ENCODE measurements at regions of chr6 and their contacts with region 1.

Region 1: DNA sequence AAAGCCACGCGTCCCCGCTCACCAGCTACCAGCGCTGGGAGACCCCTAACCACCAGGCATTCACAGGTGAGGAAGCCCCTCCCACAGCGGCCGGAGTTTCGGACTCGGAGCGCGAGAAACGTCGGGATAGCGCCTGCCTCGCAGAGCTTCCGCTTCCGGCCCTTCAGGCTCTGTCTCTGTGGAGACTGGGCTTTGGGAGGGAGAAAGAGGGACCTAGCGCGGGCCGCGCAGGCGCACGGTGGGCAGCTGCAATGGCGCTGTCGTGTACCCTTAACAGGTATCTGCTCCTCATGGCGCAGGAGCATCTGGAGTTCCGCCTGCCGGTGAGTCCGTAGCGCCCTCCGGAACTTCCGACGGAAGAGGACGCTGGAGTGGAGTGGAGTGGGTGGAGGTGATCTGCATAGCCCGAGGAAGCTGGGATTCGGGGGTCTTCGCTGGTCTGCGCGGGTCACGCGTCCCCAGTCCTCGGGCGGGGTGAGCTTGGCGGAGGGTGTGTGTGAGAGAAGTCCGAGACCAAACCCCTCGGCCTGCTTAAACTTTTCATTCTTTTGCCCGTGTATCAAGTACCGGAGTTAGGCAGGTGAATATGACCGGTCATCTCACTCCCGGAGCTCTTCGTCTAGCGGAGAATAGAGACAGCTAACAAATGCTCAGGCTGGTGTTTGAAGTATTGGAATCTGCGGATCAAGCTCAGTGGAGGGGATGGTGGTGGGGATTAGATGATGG is at the start of gene TRMT11:
- DNase-seq: peak; percentile 84
- H3K4me3 Mint-ChIP-seq: peak within 1 kb of the TSS; percentile 28
- H3K27ac Mint-ChIP-seq: no peak within 1 kb of the TSS
- H3K4me1 Mint-ChIP-seq: peaks cover 11% of the 10 kb centered on the region
- H3K27me3 Mint-ChIP-seq: no peaks in the 10 kb centered on the region
- total RNA-seq, gene TRMT11: 40.6 to 41.9 TPM

Region 2: DNA sequence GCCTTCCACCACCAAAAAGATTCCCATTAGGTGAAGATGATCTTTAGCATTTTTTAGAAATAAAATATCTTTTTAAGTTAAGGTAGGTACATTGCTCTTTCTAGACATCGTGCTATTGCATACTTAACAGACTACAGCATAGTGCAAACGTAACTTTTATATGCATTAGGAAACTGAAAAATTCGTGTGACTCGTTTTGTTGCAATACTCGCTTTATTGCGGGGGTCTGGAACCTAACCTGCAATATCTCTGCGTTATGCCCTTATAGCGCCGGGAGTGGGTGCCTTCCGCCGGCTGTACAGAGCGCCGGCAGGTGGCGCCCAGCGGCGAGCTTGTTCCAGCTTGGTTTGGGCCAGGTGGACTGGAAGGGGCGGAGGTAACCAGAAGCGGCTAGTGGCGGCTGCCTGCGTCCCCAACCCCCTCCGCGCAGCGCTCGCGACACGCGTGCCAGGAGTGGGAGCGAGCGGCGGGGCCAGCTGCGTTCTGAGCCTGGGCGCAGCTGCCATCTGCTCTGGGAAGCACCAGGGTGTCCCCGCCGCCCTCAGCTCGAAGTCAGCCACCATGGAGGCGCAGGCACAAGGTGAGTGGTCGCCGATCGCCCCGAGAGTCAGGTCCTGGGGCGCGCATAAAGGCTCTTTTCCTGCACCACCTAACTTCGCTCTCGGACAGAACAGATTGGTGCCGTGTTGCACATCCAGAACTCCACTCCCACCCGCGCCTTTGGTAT is 832.9 kb before region 1 on chr6 and contains the start of gene TPD52L1:
- CTCF ChIA-PET with region 1: no interaction called
- intact Hi-C with region 1: loop called (anchors 5 kb)
- DNase-seq: peak; percentile 73
- H3K4me3 Mint-ChIP-seq: peak within 1 kb of the TSS; percentile 74
- H3K27ac Mint-ChIP-seq: no peak within 1 kb of the TSS
- H3K4me1 Mint-ChIP-seq: peaks cover 6% of the 10 kb centered on the region
- H3K27me3 Mint-ChIP-seq: peaks cover 28% of the 10 kb centered on the region
- total RNA-seq, gene TPD52L1: 5.6 to 5.7 TPM

Region 3: GRCh38 chr6:125301435-125302391 is 684.8 kb before region 1 on chr6 and contains the start of gene HDDC2:
- CTCF ChIA-PET with region 1: no interaction called
- intact Hi-C with region 1: loop called (anchors 5 kb)
- DNase-seq: peak; percentile 38
- H3K4me3 Mint-ChIP-seq: peak within 1 kb of the TSS; percentile 88
- H3K27ac Mint-ChIP-seq: peak within 1 kb of the TSS; percentile 93
- H3K4me1 Mint-ChIP-seq: peaks cover 48% of the 10 kb centered on the region
- H3K27me3 Mint-ChIP-seq: no peaks in the 10 kb centered on the region
- total RNA-seq, gene HDDC2: 117 to 127 TPM

Region 4: DNA sequence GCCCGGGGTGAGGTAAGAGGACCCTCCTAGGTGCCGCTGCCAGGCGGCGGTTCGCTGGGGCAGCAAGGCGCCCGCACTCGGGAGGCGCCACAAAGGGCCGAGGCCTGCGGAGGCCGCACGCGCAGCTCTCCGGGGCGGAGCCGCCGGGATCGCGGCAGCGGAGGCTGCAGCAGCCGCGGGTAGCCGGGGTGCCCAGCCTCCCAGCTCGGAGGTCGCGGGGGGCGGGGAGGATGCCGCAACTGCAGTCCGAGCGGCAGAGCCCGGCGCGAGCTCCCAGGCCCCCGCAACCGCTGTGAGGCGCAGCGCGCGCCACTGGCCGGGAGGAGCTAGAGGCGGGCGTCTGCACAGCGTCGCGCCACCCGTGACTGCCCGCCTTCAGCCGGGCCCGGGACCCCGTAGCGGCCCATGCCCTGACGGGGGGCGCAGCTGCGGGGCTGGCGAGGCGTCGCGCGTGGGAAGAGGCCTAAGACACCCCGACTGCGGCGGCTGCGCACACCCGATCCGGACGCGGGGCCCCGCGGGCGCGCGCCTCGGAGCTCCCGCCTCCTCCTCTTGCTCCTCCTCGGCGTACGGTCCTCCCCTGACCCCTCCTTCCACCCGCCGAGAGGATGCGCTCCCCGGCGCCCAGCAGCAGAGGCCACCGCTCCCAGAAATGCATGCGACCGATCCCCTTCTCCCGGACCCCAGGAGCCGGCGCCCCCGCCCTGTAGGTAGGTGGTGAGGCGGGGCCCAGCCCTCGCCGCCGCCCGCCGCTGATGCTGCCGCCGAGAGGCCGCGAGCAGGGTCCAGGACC is 195.9 kb before region 1 on chr6 and contains the start of gene NCOA7:
- CTCF ChIA-PET with region 1: interaction called, 13 read pairs
- intact Hi-C with region 1: loop called (anchors 1 kb)
- DNase-seq: peak; percentile 81
- H3K4me3 Mint-ChIP-seq: peak within 1 kb of the TSS; percentile 90
- H3K27ac Mint-ChIP-seq: peak within 1 kb of the TSS; percentile 96
- H3K4me1 Mint-ChIP-seq: peaks cover 51% of the 10 kb centered on the region
- H3K27me3 Mint-ChIP-seq: no peaks in the 10 kb centered on the region
- total RNA-seq, gene NCOA7: 39.2 to 43.1 TPM

Region 5: DNA sequence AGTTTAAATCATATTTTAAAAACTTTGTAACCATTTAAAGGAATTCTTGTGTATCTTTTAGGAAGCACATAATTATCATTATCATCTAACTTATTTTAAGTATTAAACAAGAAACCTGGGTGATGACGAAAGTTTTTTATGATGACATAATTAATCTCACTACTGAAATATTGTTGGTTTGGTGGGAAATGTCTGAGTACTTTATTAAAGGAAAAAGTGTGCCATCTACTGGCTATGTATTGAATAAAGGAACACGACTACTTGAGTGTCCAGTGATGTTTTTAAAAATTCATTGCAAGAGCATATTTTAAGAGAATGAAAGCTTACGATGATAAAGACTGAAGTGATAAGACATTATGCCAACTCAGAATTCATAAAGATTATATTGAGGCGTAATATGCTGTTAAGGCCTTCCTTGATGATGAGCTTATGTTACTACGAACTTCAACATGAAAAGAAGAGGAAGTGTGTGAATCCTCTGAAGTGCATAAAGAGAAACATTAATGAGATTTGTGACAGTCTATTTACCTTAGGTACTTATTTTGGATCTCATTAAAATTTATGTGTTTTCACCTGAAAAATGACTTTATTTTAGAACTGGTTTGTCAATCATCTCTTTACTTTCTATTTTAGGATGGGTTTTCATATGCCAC is 12.1 kb before region 1 on chr6:
- CTCF ChIA-PET with region 1: interaction called, 23 read pairs
- intact Hi-C with region 1: no loop called
- DNase-seq: no peak
- H3K4me3 Mint-ChIP-seq: no peak overlapping the region
- H3K27ac Mint-ChIP-seq: no peak overlapping the region
- H3K4me1 Mint-ChIP-seq: peaks cover 7% of the 10 kb centered on the region
- H3K27me3 Mint-ChIP-seq: no peaks in the 10 kb centered on the region

Region 6: DNA sequence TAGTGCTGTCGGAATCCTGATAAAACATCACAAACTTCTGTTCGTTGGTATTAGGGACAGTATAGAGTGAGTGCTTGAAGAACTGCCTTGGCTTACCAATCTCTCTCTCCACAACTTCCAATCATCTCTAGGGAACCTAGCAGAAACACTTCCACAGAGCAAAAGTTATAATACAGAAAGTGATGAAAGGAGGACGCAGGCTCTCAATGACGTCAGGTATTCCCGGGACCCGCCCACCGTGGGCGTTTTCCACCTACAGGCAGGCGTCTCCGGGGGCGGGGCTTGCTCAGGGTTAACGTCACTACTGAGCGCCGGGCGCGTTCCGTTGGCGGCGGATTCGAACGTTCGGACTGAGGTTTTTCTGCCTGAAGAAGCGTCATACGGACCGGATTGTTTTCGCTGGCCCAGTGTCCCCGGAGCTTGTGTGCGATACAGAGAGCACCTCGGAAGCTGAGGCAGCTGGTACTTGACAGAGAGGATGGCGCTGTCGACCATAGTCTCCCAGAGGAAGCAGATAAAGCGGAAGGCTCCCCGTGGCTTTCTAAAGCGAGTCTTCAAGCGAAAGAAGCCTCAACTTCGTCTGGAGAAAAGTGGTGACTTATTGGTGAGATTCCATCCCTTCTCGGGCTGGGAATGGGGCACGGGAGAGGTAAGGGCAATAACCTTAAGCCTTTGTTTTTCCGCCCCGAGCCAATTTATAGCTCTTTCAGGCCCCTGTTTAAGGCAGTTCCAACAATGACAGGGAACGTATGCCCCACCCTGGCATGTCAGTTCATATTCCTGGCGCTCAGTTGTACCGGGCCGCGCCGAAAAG is 353.5 kb after region 1 on chr6 and contains the start of gene CENPW:
- CTCF ChIA-PET with region 1: no interaction called
- intact Hi-C with region 1: loop called (anchors 1 kb)
- DNase-seq: peak; percentile 98
- H3K4me3 Mint-ChIP-seq: no peak within 1 kb of the TSS
- H3K27ac Mint-ChIP-seq: no peak within 1 kb of the TSS
- H3K4me1 Mint-ChIP-seq: peaks cover 14% of the 10 kb centered on the region
- H3K27me3 Mint-ChIP-seq: no peaks in the 10 kb centered on the region
- total RNA-seq, gene CENPW: 77.8 to 85.8 TPM

Region 7: DNA sequence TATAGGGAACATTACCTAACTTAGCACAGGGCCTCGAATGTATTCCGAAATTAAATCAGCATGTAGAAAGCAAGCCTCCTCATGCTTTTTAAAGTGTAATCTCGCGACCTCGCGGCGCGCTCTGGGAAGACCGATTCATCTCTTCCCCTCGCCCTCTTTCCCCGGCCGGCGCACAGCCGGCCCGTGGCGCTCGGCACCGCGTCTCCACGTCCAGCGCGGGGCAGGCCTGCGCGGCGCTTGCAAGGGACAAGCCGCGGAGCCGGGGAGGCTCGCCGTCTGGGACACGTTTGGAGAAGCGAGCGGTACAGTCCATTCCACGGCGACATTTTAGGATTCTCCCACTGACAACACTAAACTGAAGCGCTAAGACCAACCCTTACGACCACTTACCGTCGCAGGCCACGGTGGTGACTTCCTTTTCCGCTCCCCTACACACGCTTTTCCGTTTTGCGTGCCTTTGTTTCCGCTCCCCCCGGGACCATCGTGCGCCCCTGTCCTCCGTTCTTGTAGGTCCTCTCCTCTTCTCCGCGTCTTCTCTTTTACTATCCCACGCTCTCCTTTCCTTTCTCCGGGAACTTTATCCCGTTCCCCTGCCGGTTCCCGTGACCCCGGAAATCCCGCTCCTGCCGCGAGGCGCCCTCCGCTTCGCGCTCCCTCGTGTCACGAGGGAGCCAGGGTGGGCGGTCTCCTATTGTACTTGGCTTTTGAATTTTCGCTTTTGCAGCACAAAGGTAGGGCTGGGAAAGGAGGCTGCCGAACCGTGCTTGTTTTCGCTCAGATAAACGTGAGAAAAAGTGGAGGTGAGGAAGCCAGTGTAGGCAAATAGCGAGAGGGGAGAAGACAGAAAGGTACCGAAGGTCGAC is 1356.7 kb after region 1 on chr6 and contains the start of gene ECHDC1:
- CTCF ChIA-PET with region 1: no interaction called
- intact Hi-C with region 1: loop called (anchors 2 kb)
- DNase-seq: peak; percentile 81
- H3K4me3 Mint-ChIP-seq: no peak within 1 kb of the TSS
- H3K27ac Mint-ChIP-seq: no peak within 1 kb of the TSS
- H3K4me1 Mint-ChIP-seq: peaks cover 13% of the 10 kb centered on the region
- H3K27me3 Mint-ChIP-seq: no peaks in the 10 kb centered on the region
- total RNA-seq, gene ECHDC1: 40.1 to 41.4 TPM

Measured in activated naive CD4-positive, alpha-beta T cell treated with anti-CD3 and anti-CD28 coated beads for 36 hours (primary cell).